ENCODE measurements at regions of chrX and their contacts with region 1.

Region 1: GRCh38 chrX:118904218-118904617 is 70.2 kb upstream of the LONRF3 start:
- DNase-seq: no peak
- ATAC-seq: no peak
- H3K4me3 ChIP-seq: no peak overlapping the region
- H3K27ac ChIP-seq: no peak overlapping the region
- H3K4me1 ChIP-seq: no peaks in the 10 kb centered on the region
- H3K27me3 ChIP-seq: no peaks in the 10 kb centered on the region
- CTCF ChIP-seq: no peak
- POLR2A ChIP-seq: no peak
- RAD21 ChIP-seq: no peak

Region 2: DNA sequence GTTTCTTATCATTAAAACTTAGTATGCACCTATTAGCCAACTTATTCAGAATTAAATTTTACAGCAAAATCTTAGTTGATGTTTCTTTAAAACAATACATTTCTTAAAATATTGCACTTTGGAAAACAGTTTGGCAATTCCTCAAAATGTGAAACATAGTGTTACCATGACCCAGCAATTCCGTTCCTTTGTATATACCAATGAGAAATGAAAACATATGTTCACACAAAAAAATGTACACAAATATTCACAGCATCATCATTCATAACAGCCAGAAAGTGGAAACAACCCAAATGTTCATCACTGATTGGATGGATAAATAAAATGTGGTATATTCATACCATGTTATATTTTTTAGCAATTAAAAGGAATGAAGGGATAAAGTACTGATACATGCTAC is 508.1 kb before region 1 on chrX:
- CTCF ChIA-PET with region 1: no interaction called
- POLR2A ChIA-PET with region 1: no interaction called
- dilution Hi-C with region 1: no loop called
- in situ Hi-C with region 1: no loop called
- intact Hi-C with region 1: no loop called
- DNase-seq: peak; percentile 39
- ATAC-seq: peak; percentile 53
- H3K4me3 ChIP-seq: no peak overlapping the region
- H3K27ac ChIP-seq: no peak overlapping the region
- H3K4me1 ChIP-seq: no peaks in the 10 kb centered on the region
- H3K27me3 ChIP-seq: no peaks in the 10 kb centered on the region
- CTCF ChIP-seq: no peak
- POLR2A ChIP-seq: no peak
- RAD21 ChIP-seq: no peak

Region 3: DNA sequence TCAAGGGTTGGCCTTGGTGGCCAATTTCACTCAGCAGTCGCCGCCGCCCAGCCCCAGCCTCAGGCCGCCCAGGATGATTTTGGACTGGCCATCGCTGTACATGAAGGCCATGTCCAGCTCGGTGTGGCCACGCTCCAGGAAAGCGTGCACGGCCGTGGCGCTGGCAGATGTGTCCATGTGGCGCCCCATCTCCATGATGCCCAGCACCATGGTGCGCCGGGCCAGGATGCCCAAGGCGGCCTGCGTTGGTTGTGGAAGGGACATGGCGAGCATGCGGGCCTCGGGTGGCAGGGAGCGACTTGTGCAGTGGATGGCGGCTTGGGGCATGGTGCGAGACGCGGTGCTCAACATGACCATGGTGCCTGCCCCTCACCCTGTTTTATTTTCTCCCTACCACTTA is 25.2 kb before region 1 on chrX:
- CTCF ChIA-PET with region 1: no interaction called
- POLR2A ChIA-PET with region 1: no interaction called
- dilution Hi-C with region 1: no loop called
- in situ Hi-C with region 1: no loop called
- intact Hi-C with region 1: loop called (anchors 2 kb)
- DNase-seq: no peak
- ATAC-seq: no peak
- H3K4me3 ChIP-seq: no peak overlapping the region
- H3K27ac ChIP-seq: no peak overlapping the region
- H3K4me1 ChIP-seq: no peaks in the 10 kb centered on the region
- H3K27me3 ChIP-seq: no peaks in the 10 kb centered on the region
- CTCF ChIP-seq: no peak
- POLR2A ChIP-seq: no peak
- RAD21 ChIP-seq: no peak

Region 4: DNA sequence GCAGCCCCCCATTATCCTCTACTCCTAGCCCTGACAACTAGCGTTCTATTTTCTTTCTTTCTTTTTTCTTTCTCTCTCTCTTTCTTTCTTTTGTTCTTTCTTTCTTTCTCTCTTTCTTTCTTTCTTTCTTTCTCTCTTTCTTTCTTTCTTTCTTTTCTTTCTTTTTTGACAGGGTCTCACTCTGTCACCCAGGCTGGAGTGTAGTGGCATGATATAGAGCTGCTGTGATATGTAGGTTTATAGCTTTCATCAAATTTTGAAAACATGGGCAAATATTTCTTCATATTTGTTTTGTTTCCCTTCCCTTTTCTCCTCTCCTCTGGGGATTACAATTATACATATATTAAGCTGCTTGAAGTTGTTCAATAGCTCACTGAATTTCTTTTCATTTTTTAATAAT is 31.1 kb after region 1 on chrX:
- CTCF ChIA-PET with region 1: no interaction called
- POLR2A ChIA-PET with region 1: interaction called, 17 read pairs
- dilution Hi-C with region 1: no loop called
- in situ Hi-C with region 1: no loop called
- intact Hi-C with region 1: no loop called
- DNase-seq: no peak
- ATAC-seq: no peak
- H3K4me3 ChIP-seq: no peak overlapping the region
- H3K27ac ChIP-seq: no peak overlapping the region
- H3K4me1 ChIP-seq: no peaks in the 10 kb centered on the region
- H3K27me3 ChIP-seq: no peaks in the 10 kb centered on the region
- CTCF ChIP-seq: no peak
- POLR2A ChIP-seq: no peak
- RAD21 ChIP-seq: no peak